ENCODE measurements at regions of chr11 and their contacts with region 1.

Region 1: DNA sequence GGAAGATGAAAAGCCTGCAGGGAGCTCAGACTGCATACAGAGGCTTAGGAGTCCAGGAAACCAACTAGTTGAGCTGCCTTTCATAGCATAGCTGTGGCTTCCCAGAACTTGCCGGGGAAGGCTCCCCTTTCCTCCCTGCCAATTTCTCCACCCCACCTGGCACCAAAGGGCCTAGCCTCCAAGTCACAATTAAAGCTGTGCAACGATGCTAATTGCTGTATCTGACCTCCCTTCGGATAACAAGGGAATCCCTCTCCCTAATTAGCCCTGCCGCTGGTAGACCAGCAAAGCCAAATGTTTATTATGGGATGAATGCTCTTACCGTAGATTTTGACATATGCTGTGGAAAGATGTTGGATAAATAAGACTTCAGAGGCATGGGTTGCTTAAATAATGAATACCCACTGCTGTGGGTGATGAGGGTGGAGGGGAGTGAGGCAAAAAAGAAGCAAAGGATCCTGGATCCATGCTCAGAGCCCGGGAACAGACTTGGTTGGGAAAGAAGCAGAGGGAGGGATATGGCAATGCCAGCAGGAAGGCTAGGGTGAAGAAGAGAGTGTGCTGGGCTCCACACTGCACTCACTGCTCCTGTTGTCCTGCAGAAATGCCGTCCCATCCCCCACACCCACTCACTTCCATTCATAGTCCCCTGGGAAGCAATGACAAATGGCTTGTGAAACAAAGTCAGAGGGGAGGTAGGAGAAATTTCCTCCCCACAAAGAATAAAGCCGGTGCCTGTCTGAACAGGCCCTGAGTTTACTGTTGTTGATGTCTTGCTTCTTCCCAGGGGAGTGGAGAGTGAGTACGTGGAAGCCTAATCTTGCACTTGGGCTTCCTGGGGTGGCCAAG is 608.1 kb upstream of the CADM1 start:
- DNase-seq: no peak

Region 2: GRCh38 chr11:117468888-117469287 is 1356.6 kb after region 1 on chr11:
- intact Hi-C with region 1: loop called in 1 of 2 experiments (anchors 10 kb)
- DNase-seq: peak; percentile 32

Measured in posterior vena cava (tissue), 2 donors.